ENCODE measurements at regions of chr5 and their contacts with region 1.

Region 1: GRCh38 chr5:150801117-150801927 is 22.8 kb downstream of the SMIM3 start:
- DNase-seq: peak in 2 of 5 donors; percentile 24 to 28
- ATAC-seq: peak; percentile 67 to 87 (median 86)
- H3K4me3 ChIP-seq: peak overlapping the region in 11 of 12 donors; percentile 3 to 56 (median 41)
- H3K27ac ChIP-seq: peak overlapping the region in 10 of 12 donors; percentile 2 to 72 (median 52)
- H3K4me1 ChIP-seq: peaks cover 0 to 10% (median 0%) of the 10 kb centered on the region in 12 donors
- H3K27me3 ChIP-seq: no peaks in the 10 kb centered on the region
- CTCF ChIP-seq: peak in 11 of 12 donors; percentile 28 to 62 (median 47)
- POLR2A ChIP-seq: no peak

Region 2: GRCh38 chr5:150758531-150759333 is 42.6 kb before region 1 on chr5 and contains the start of gene DCTN4:
- intact Hi-C with region 1: loop called in 1 of 10 experiments (anchors 5 kb)
- DNase-seq: peak; percentile 97 to 98 (median 97)
- ATAC-seq: peak; percentile 93 to 99 (median 96)
- H3K4me3 ChIP-seq: peak within 1 kb of the TSS; percentile 43 to 88 (median 73)
- H3K27ac ChIP-seq: peak within 1 kb of the TSS; percentile 90 to 98 (median 96)
- H3K4me1 ChIP-seq: peaks cover 6 to 60% (median 17%) of the 10 kb centered on the region in 12 donors
- H3K27me3 ChIP-seq: no peaks in the 10 kb centered on the region
- CTCF ChIP-seq: peak in 4 of 12 donors; percentile 12 to 47 (median 20)
- POLR2A ChIP-seq: peak in 1 of 2 donors; percentile 59
- total RNA-seq, gene DCTN4: 41.6 to 70.6 (median 50.4) TPM